ENCODE measurements at regions of chr14 and their contacts with region 1.

Region 1: DNA sequence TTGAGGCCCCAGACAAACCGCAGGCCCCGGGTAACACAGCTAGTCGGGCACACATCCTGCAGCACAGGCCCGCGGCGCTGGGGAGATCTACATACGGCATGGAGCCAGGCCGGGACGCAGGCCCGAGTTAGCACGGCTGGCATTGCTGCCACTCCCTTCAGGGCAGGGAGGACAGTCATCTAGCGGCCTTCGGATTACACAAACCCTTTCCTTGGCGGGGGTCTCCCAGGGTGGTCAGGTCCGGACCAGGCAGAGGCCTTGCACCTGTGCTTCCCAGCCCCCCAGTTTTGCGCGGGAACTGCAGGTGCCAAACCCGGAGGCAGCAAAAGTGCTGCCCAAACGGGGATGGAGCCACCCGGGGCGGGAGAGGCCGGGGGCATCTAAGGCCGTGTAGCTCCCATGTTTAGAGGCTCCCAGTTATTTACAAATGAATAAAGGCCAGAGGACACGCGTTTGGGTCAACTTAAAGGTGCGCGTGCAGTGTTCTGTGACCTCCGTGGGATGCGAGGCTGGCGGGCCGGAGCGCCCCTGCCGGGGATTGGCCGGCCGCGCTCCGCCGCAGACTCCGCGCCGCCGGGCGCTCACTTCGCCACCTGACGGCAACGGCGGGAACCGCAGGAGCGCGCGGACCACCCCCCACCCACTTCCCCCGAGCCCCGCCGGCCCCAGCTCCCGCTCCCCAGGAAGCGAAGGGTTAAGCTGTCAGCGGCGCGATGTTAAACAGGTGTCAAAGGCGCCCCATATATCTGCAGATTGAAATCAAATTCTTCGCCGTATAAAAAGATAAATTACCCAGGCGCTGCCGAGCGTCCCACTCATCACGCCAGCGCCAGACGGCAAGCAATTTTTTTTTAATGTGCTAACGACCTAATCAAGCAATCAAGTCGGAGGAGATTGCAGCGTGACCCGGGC is 18.1 kb downstream of the VSX2 start:
- DNase-seq: peak; percentile 43
- H3K4me3 ChIP-seq: peak overlapping the region; percentile 31 to 64 (median 44)
- H3K27ac ChIP-seq: no peak overlapping the region
- H3K4me1 ChIP-seq: peaks cover 5 to 15% (median 14%) of the 10 kb centered on the region in 4 donors
- H3K27me3 ChIP-seq: peaks cover 33% of the 10 kb centered on the region
- CTCF ChIP-seq: peak; percentile 51 to 99 (median 95)
- EP300 ChIP-seq: no peak
- POLR2A ChIP-seq: no peak

Region 2: GRCh38 chr14:72699852-72700257 is 1557.5 kb before region 1 on chr14:
- in situ Hi-C with region 1: no loop called
- intact Hi-C with region 1: no loop called
- DNase-seq: no peak
- H3K4me3 ChIP-seq: no peak overlapping the region
- H3K27ac ChIP-seq: no peak overlapping the region
- H3K4me1 ChIP-seq: no peaks in the 10 kb centered on the region
- H3K27me3 ChIP-seq: no peaks in the 10 kb centered on the region
- CTCF ChIP-seq: no peak
- EP300 ChIP-seq: no peak
- POLR2A ChIP-seq: no peak

Region 3: DNA sequence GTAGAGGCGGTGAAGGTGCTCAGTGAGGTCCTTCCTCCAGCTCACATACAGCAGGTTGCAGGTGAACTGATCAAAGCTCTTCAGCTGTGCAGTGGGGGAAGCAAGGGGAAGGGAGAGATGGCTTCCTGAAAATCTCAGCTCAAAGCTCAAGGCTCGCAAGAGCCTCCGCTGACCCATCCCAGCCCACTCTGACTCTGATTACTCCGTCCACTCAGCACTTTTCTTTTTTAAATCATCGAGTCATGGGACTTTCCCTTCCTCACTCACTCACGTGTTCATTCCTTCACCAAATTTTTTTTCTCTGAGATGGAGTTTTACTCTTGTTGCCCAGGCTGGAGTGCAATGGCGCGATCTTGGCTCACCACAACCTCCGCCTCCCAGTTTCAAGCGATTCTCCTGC is 40.7 kb after region 1 on chr14:
- in situ Hi-C with region 1: no loop called
- intact Hi-C with region 1: loop called (anchors 1 kb)
- DNase-seq: no peak
- H3K4me3 ChIP-seq: no peak overlapping the region
- H3K27ac ChIP-seq: no peak overlapping the region
- H3K4me1 ChIP-seq: peaks cover 0 to 19% (median 6%) of the 10 kb centered on the region in 4 donors
- H3K27me3 ChIP-seq: no peaks in the 10 kb centered on the region
- CTCF ChIP-seq: no peak
- EP300 ChIP-seq: no peak
- POLR2A ChIP-seq: no peak